Esophagus muscularis mucosa (tissue), 4 donors: ENCODE measurements at regions of chr7 and their contacts with region 1.

Region 1: GRCh38 chr7:55964261-55965099 is at the start of gene NIPSNAP2:
- DNase-seq: peak; percentile 92
- H3K4me3 ChIP-seq: peak within 1 kb of the TSS; percentile 71 to 92 (median 76)
- H3K27ac ChIP-seq: peak within 1 kb of the TSS; percentile 95 to 99 (median 96)
- H3K4me1 ChIP-seq: peaks cover 28 to 61% (median 44%) of the 10 kb centered on the region in 4 donors
- H3K27me3 ChIP-seq: no peaks in the 10 kb centered on the region
- CTCF ChIP-seq: peak; percentile 39 to 76 (median 62)
- EP300 ChIP-seq: no peak
- POLR2A ChIP-seq: peak; percentile 46
- total RNA-seq, gene NIPSNAP2: 93.3 to 131 (median 116) TPM

Region 2: DNA sequence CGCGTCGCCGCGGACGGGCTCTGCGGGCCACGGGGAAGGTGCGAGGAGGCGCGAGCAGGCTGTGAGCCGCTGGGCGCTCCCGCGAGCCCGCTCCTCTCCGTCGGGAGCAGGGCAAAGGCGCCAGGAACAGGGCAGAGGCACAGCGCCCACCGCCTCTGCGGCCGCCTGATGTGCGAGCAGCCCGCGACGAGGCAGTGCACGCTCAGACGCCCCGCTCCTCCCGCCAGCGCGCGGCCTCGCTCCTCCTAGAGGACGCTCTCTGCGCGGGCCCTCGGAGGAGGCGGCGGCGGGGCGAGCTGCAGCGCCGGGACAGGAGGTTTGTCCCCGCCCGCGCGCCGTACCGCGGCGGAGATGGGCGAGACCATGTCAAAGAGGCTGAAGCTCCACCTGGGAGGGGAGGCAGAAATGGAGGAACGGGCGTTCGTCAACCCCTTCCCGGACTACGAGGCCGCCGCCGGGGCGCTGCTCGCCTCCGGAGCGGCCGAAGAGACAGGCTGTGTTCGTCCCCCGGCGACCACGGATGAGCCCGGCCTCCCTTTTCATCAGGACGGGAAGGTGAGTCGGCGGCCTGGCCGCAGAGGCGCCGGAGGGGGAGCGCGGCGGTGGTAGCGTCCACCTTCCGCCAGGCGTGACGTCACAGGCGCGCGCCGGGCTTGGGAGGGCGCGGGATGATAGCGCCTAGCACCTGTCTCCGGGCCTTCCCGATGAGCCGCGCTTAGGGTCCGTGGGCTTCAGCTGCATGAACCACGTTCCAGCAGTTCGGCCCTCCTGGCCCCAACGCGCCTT is 598.6 kb before region 1 on chr7:
- intact Hi-C with region 1: loop called (anchors 10 kb)
- DNase-seq: peak; percentile 98
- H3K4me3 ChIP-seq: peak overlapping the region; percentile 76 to 95 (median 84)
- H3K27ac ChIP-seq: peak overlapping the region; percentile 94 to 97 (median 96)
- H3K4me1 ChIP-seq: peaks cover 19 to 25% (median 21%) of the 10 kb centered on the region in 4 donors
- H3K27me3 ChIP-seq: no peaks in the 10 kb centered on the region
- CTCF ChIP-seq: peak; percentile 16 to 35 (median 27)
- EP300 ChIP-seq: no peak
- POLR2A ChIP-seq: peak; percentile 34

Region 3: GRCh38 chr7:55639640-55640039 is 324.8 kb before region 1 on chr7:
- intact Hi-C with region 1: loop called (anchors 5 kb)
- DNase-seq: no peak
- H3K4me3 ChIP-seq: no peak overlapping the region
- H3K27ac ChIP-seq: no peak overlapping the region
- H3K4me1 ChIP-seq: peaks cover 0 to 6% (median 3%) of the 10 kb centered on the region in 4 donors
- H3K27me3 ChIP-seq: peaks cover 0 to 3% (median 0%) of the 10 kb centered on the region in 4 donors
- CTCF ChIP-seq: no peak
- EP300 ChIP-seq: no peak
- POLR2A ChIP-seq: no peak

Region 4: GRCh38 chr7:55887821-55888247 is 76.6 kb before region 1 on chr7:
- intact Hi-C with region 1: loop called (anchors 5 kb)
- DNase-seq: no peak
- H3K4me3 ChIP-seq: peak overlapping the region; percentile 52 to 79 (median 62)
- H3K27ac ChIP-seq: peak overlapping the region; percentile 65 to 72 (median 70)
- H3K4me1 ChIP-seq: peaks cover 3 to 12% (median 8%) of the 10 kb centered on the region in 4 donors
- H3K27me3 ChIP-seq: no peaks in the 10 kb centered on the region
- CTCF ChIP-seq: no peak
- EP300 ChIP-seq: no peak
- POLR2A ChIP-seq: no peak

Region 5: DNA sequence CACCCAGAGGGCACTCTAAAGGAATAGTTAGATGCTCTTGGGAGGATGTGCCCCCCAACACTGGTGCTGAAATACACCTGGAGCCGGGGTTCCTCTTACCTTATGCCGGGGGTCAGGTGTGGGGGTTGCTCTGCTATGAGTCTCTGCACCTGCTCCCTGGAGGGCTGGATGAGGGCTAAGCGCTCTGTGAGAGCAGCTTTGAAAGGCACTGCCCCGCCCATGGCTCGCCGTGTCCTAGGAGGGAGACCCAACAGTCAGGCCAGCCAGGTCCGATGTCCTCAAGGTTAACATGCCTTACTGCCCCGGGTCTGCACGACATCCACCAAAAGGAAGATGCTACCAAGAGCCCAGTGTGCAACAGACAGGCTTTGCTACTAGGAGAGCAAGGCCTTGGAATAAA is 55.0 kb after region 1 on chr7:
- intact Hi-C with region 1: no loop called
- DNase-seq: no peak
- H3K4me3 ChIP-seq: no peak overlapping the region
- H3K27ac ChIP-seq: no peak overlapping the region
- H3K4me1 ChIP-seq: no peaks in the 10 kb centered on the region
- H3K27me3 ChIP-seq: no peaks in the 10 kb centered on the region
- CTCF ChIP-seq: no peak
- EP300 ChIP-seq: no peak
- POLR2A ChIP-seq: no peak

Region 6: DNA sequence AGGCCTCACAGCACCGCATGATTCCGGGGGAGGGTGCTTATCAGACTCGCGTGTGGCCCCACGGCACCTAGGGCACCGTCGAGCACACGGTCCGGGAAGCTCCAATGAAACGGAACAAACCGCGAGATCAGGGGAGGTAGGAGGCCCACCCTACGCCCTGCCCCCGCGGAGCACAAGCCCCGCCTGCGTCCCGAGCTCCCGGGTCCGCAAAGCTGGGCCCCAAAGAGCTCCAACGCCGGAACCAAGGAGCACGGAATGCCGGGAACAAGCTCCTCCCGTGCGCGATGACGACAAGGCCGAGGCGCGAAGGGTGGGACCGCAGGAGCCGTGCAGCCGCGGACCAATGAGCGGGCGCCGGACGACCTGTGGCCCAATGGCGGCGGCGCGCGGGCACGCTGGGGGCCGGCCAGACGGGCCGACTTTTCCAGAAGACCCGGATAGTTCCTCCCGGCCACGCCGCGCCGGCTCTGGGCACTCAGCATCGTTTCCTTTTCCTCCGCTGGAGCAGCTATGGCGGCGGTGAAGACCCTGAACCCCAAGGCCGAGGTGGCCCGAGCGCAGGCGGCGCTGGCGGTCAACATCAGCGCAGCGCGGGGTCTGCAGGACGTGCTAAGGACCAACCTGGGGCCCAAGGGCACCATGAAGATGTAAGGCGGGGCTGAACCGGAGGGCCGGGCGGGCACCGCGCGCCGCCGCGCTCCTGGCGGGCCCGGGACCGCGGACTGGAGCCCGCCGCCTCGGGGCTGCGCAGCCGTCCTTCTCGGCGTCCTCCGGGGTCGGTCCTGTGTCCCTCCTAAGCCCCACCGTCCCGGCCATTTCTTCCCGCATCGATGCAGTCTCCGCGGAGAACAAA is 87.1 kb after region 1 on chr7 and contains the starts of genes CCT6A and PSPH:
- intact Hi-C with region 1: loop called (anchors 10 kb)
- DNase-seq: peak; percentile 99
- H3K4me3 ChIP-seq: peak within 1 kb of the TSS; percentile 87 to 97 (median 96)
- H3K27ac ChIP-seq: peak within 1 kb of the TSS; percentile 93 to 99 (median 95)
- H3K4me1 ChIP-seq: peaks cover 26 to 80% (median 56%) of the 10 kb centered on the region in 4 donors
- H3K27me3 ChIP-seq: no peaks in the 10 kb centered on the region
- CTCF ChIP-seq: no peak
- EP300 ChIP-seq: peak; percentile 44
- POLR2A ChIP-seq: peak; percentile 44
- total RNA-seq, gene CCT6A: 86.6 to 104 (median 87.9) TPM
- total RNA-seq, gene PSPH: 9.1 to 15.9 (median 13.1) TPM